Head of caudate nucleus (tissue), 42 donors: ENCODE measurements at regions of chr12 and their contacts with region 1.

Region 1: DNA sequence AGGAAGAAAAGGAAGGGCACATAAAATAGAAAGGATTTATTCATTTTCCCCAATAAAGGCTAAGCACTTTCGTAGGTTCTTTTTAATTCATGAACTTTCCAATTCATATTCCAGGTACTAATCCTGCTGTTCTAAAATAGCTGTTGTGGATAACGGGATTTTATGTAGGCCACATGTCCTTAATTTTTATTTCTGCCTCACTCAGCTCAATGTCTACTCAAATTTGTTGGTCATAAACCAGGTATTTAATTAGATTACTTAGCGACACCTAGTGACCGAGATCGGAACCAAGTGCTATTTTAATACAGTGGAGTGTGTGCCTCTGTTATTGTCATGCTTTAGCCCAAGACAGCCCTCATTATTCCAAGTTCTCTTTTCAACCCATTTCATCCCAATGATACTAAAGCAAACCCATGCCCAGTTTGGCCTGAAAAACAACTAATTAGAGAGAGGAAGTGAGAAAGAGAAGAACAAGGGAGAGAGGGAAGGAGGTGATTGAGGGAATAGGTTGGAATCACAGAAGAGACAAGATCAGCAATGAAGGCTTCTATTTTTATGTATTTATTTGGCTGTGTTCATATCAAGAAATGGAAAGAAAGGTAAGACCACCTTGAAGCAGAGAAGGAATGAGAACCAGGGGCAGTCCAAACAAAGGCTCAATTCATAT is 45.9 kb upstream of the IFNG-AS1 start:
- DNase-seq: peak in 38 of 42 donors; percentile 11 to 91 (median 70)

Region 2: GRCh38 chr12:67355578-67356379 is 587.6 kb before region 1 on chr12:
- intact Hi-C with region 1: loop called (anchors 5 kb)
- DNase-seq: peak in 13 of 42 donors; percentile 8 to 53 (median 21)

Region 3: DNA sequence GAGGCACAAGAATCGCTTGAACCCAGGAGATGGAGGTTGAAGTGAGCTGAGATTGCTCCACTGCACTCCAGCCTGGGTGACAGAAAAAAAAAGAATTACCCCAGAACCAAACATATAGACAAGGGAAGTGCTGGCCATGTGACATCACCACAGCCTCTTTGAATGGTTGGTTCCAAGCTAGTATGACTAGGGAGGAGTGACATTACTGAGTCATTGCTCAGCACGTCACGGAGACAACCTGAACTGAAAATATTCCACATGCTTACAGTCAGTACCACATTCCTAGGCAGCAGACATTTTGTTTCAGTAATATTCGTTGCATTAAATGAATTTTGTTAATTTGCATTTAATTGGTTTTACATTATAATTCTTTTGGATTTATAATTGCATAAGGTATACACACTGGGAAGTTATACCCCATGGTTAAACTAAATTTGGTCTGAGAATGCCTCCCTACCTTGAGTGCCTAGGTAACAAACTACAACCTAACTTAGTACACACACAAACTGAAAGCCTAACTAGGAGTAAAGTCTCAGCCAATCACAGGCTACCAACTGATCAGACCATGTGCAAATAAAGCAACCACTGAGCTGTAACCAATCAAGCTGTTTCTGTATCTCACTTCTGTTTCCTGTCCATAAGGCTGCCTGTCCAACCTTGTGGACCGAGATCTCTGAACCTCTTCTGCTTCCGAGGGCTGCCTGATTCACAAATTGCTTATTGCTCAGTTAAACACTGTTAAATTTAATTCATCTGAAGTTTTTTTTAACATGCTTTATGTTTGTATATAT is 509.8 kb before region 1 on chr12:
- intact Hi-C with region 1: loop called (anchors 5 kb)
- DNase-seq: no peak

Region 4: DNA sequence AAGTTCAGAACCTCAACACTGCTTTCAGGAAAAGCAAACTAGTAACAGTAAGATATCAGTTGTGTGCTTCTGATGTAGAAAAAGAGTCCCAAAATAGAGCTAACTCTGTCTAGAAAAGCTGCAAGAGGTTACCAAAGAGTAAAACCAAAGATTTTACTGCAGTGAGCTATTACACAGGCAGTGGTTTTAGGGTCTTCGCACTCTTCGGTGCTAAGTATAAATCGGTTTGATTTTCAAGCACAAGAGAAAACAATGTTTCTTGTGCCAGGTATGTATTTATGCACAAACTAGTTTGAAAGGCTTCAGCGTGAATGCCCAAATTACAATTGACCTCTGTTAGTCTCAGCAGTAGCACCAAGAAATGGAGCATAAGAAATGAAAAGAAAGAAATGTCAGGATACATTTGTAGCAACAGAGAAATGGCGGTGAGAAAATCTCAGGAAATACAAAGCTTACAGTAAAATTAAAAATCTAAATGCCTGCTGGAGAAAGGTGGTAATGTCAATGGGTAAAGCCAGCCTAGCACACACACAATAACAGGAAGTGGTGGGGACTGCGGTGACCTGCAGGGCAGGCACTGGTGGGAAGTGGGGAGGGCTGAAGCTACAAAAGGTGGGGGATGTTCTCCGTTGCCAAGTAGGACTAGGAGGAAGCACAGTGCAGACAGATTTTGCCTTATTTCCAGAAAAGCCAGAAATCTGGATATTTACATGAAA is 312.8 kb before region 1 on chr12:
- intact Hi-C with region 1: loop called (anchors 10 kb)
- DNase-seq: peak in 18 of 42 donors; percentile 4 to 36 (median 17)

Region 5: DNA sequence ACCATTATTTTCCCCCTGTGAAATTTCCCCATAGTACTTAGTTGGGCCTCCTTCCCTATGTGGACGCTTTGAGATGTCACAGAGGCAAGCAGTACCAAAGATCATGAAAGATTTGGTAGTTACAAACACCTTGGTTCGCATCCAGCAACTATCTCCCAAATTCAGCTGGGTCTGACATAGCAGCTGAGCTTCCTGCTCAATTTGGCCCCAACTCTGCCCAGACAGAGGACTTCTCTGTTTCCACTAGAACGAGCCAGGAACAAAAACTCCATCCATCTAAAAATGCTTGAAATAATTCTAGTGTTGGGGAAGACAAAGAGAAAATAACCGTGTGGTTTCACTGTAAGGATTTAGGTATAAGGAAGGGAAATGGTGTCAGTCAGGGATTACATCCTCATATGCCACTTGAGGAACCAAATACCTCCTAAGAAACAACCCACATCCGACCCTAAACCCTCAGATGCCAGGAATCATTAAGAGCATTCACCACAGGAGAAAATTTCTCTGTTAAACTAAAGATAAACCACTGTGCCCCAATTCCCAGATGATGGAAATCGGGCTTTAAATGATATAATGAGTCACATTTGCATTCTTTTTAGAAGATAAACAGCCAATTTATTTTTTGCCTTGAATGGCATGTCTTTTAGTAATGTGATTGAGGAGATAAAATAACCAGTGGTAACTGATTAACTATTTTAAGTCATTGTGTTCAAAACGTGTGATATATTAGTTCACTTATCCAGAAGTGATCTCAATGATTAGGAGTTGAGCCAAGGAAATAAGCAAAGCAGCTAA is 57.8 kb before region 1 on chr12:
- intact Hi-C with region 1: no loop called
- DNase-seq: peak in 6 of 42 donors; percentile 2 to 36 (median 13)

Region 6: GRCh38 chr12:68331869-68332727 is 388.7 kb after region 1 on chr12 and contains the start of gene MDM1:
- intact Hi-C with region 1: no loop called
- DNase-seq: peak; percentile 95 to 99 (median 98)